Activated T-helper 1 cell treated with anti-CD3 and anti-CD28 coated beads, Interleukin-12 subunit alpha, Interleukin-12 subunit beta, Interleukin-2, Interleukin-4 antibody, amounts not matched to agents 30 ng/mL and 10 ng/mL and 1 ng/mL, durations not matched to agents 14 hours and 24 hours and 36 hours (primary cell): ENCODE measurements at regions of chr10 and their contacts with region 1.

Region 1: GRCh38 chr10:124791378-124792348 is at the start of gene EEF1AKMT2:
- DNase-seq: peak; percentile 78
- H3K4me3 Mint-ChIP-seq: peak within 1 kb of the TSS; percentile 94
- H3K27ac Mint-ChIP-seq: peak within 1 kb of the TSS; percentile 92
- H3K4me1 Mint-ChIP-seq: peaks cover 24% of the 10 kb centered on the region
- H3K27me3 Mint-ChIP-seq: peaks cover 3% of the 10 kb centered on the region
- total RNA-seq, gene EEF1AKMT2: 20.5 and 21.3 TPM in 2 replicates

Region 2: DNA sequence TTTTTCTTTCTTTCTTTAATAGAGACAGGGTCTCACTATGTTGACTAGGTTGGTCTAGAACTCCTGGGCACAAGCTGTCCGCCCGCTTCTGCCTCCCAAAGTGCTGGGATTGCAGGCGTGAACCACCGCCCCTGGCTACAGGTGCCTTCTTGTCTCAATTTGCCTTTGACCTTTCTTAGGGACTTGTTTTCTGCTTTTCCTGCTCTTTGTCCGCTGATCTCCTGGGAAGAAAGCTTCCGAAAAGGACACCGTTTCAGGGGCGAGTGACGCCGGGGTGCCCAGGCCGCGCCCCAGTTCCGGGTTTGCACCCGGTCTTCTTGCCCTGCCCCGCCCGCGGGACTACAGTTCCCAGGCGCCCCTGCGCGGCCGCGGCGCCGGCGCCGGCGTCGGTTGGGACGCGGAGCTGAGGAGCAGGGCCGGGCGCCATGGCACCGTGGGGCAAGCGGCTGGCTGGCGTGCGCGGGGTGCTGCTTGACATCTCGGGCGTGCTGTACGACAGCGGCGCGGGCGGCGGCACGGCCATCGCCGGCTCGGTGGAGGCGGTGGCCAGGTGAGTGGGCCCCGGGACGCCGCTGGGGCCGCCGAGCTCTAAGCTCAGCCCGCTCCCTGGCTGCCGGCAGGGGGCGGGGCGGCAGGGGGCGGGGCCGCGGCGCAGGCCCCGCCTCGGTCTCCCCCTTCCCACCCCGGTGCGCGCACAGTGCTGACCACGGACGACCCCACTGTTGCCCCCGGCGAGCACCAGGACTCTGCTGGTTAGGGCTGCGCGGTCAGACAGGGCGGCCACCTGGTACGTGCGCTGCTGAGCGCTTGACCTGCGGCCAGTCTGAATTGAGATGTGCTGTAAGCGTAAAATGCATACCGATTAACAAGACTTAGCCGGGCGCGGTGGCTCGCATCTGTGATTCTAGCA is 330.0 kb before region 1 on chr10 and contains the start of gene LHPP:
- intact Hi-C with region 1: loop called (anchors 5 kb)
- DNase-seq: peak; percentile 86
- H3K4me3 Mint-ChIP-seq: peak within 1 kb of the TSS; percentile 87
- H3K27ac Mint-ChIP-seq: peak within 1 kb of the TSS; percentile 98
- H3K4me1 Mint-ChIP-seq: peaks cover 26% of the 10 kb centered on the region
- H3K27me3 Mint-ChIP-seq: peaks cover 14% of the 10 kb centered on the region
- total RNA-seq, gene LHPP: 4.6 and 5.0 TPM in 2 replicates

Region 3: DNA sequence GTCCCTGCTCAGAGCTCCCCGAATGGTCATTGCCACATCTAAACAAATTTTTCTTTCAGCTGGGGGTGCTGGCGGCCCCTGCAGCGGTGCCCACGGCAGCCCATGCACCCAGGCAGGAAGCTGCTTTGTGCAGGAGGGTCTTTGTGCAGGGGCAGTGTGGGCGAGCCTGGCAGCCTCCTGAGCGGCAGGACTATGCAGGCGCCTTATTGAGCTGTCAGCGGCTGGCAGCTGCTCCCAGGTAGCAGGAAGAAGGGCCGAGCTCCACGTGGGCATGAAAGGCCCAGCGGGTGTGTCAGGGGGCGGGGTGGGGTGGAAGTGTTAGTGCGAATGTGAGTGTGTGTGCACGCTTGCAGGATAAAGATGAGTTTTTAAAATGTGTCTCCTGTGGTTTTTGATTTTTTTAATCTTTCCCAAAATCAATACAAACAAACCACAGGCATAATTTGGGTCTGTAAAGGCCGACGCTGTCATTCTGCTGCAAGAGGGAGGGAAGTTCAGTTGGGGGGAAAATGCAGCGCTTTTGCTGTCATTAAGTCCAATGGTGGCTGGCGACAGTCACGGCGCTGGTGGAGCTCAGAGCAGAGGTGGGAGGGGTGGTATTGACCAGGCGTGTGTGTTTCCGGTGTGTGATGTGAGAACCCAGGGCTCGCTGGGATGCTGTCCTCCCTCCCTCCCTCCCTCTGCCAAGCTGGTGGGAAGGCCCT is 246.2 kb before region 1 on chr10:
- intact Hi-C with region 1: no loop called
- DNase-seq: no peak
- H3K4me3 Mint-ChIP-seq: no peak overlapping the region
- H3K27ac Mint-ChIP-seq: no peak overlapping the region
- H3K4me1 Mint-ChIP-seq: no peaks in the 10 kb centered on the region
- H3K27me3 Mint-ChIP-seq: peaks cover 16% of the 10 kb centered on the region

Region 4: DNA sequence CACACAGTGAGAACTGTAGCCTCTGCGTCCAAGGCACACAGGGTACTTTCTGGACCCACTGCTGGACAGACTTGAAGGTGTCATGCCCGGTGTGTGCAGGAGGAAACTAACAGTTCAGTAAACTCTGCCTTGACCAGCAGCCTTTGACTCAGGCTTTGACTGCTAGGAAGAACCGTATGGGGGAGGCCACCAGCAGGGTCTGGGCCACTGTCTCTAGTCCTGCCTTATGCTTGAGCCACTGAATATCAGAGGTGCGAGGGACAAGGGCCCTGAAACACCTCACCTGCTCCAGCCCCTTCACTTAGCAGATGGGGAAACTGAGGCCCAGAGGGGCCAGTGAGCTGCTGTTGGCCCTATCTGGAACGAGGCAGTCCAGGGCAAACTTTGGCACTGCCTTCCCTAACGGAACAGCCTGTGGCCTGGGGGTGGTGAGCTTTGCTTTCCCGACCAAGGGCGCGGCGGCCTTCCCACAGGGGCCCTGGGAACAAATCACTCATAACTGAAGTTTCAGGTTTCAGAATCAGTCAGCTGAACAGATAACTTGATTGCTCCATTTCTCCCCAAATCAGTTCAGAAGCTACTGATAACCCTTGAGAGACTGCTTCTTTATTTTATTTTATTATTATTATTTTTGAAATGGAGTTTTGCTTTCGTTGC is 177.5 kb before region 1 on chr10:
- intact Hi-C with region 1: loop called (anchors 1 kb)
- DNase-seq: peak; percentile 41
- H3K4me3 Mint-ChIP-seq: no peak overlapping the region
- H3K27ac Mint-ChIP-seq: no peak overlapping the region
- H3K4me1 Mint-ChIP-seq: peaks cover 40% of the 10 kb centered on the region
- H3K27me3 Mint-ChIP-seq: peaks cover 2% of the 10 kb centered on the region

Region 5: GRCh38 chr10:124802313-124802675 is 10.6 kb after region 1 on chr10:
- intact Hi-C with region 1: loop called (anchors 1 kb)
- DNase-seq: no peak
- H3K4me3 Mint-ChIP-seq: peak overlapping the region; percentile 95
- H3K27ac Mint-ChIP-seq: peak overlapping the region; percentile 89
- H3K4me1 Mint-ChIP-seq: peaks cover 19% of the 10 kb centered on the region
- H3K27me3 Mint-ChIP-seq: peaks cover 6% of the 10 kb centered on the region

Region 6: GRCh38 chr10:124842721-124843120 is 51.1 kb after region 1 on chr10:
- intact Hi-C with region 1: no loop called
- DNase-seq: no peak
- H3K4me3 Mint-ChIP-seq: no peak overlapping the region
- H3K27ac Mint-ChIP-seq: no peak overlapping the region
- H3K4me1 Mint-ChIP-seq: no peaks in the 10 kb centered on the region
- H3K27me3 Mint-ChIP-seq: no peaks in the 10 kb centered on the region

Region 7: GRCh38 chr10:125719146-125720001 is 927.7 kb after region 1 on chr10 and contains the start of gene EDRF1:
- intact Hi-C with region 1: loop called (anchors 5 kb)
- DNase-seq: peak; percentile 100
- H3K4me3 Mint-ChIP-seq: peak within 1 kb of the TSS; percentile 98
- H3K27ac Mint-ChIP-seq: peak within 1 kb of the TSS; percentile 98
- H3K4me1 Mint-ChIP-seq: peaks cover 21% of the 10 kb centered on the region
- H3K27me3 Mint-ChIP-seq: no peaks in the 10 kb centered on the region
- total RNA-seq, gene EDRF1: 43.4 and 43.9 TPM in 2 replicates